Head of caudate nucleus (tissue), 42 donors: ENCODE measurements at regions of chr2 and their contacts with region 1.

Region 1: GRCh38 chr2:118003396-118003824 is 10.5 kb downstream of the CCDC93 start:
- DNase-seq: peak in 33 of 42 donors; percentile 11 to 88 (median 68)

Region 2: DNA sequence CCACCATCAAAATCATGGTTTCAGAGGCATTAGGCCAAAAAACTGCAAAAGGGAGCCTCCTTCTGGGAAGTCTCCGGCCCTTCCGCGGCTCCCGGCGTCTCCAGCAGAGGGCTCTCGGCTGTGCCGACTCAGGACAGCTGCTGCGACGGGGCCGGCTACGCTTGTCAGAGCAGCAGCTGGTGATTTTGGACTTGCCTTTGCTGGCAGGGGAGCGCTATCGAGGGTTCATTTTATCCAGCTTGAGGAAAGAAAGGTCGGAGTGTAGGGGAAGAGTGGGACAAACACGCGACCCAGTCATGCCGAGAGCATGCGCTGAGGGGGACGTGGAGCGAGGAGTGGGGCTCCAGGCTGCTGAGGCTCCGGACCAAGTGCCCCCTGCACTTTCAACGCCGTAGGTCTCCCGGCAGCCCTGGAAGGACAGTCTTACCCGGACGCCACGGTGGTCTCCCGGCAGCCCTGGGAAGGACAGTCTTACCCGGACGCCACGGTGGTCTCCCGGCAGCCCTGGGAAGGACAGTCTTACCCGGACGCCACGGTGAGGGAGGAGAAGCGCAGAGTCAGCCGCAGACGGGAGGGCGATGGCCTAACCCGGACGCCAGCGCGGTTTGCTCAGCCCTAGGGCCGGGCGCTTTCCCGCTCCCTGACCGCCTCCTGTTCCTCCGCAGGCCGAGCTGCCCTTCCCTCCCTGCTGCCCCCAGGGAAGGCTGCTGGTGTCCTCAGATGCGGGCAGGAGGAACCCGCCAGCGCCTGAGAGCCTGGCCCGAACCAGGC is 167.2 kb before region 1 on chr2:
- intact Hi-C with region 1: loop called (anchors 5 kb)
- DNase-seq: peak; percentile 72 to 92 (median 85)

Region 3: GRCh38 chr2:117888897-117889296 is 114.5 kb before region 1 on chr2:
- intact Hi-C with region 1: no loop called
- DNase-seq: no peak

Region 4: DNA sequence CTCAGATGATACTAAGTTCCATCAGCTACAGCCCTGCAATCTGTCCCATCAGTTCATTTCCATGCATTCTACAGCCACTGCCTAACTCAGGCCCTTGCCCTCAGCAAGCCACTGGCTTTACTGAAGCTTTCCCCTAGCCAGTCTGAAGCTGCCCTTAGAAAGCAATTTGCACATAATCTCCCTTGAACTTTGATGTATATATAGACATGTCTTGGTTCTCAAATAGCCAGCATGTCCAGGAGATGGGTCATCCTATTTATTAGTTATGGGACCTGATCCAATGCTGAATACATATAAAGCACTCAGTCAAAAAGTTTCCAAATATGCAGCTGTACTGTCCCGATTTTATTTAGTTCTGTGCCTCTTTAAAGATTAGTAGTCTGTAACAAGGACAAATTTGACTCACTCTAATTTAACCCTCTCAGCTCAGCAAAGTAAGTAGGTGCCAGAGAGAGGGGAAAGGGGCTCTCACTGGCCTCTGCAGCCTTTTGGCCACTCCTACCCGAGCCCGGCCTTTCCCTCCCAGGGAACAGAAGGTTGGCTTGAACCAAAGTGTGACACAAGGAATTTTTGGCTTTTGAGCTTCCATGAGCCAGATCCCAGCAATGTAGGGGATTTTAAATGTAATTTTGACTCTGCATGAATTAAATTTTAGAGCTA is 60.3 kb before region 1 on chr2:
- intact Hi-C with region 1: no loop called
- DNase-seq: no peak